Aorta (tissue), 5 donors: ENCODE measurements at regions of chr12 and their contacts with region 1.

Region 1: GRCh38 chr12:6323340-6323994 is 13.0 kb downstream of the PLEKHG6 start:
- DNase-seq: peak in 1 of 2 donors; percentile 64
- ATAC-seq: peak; percentile 57
- H3K4me3 ChIP-seq: no peak overlapping the region
- H3K27ac ChIP-seq: peak overlapping the region; percentile 38 to 80
- H3K4me1 ChIP-seq: no peaks in the 10 kb centered on the region
- H3K27me3 ChIP-seq: no peaks in the 10 kb centered on the region

Region 2: DNA sequence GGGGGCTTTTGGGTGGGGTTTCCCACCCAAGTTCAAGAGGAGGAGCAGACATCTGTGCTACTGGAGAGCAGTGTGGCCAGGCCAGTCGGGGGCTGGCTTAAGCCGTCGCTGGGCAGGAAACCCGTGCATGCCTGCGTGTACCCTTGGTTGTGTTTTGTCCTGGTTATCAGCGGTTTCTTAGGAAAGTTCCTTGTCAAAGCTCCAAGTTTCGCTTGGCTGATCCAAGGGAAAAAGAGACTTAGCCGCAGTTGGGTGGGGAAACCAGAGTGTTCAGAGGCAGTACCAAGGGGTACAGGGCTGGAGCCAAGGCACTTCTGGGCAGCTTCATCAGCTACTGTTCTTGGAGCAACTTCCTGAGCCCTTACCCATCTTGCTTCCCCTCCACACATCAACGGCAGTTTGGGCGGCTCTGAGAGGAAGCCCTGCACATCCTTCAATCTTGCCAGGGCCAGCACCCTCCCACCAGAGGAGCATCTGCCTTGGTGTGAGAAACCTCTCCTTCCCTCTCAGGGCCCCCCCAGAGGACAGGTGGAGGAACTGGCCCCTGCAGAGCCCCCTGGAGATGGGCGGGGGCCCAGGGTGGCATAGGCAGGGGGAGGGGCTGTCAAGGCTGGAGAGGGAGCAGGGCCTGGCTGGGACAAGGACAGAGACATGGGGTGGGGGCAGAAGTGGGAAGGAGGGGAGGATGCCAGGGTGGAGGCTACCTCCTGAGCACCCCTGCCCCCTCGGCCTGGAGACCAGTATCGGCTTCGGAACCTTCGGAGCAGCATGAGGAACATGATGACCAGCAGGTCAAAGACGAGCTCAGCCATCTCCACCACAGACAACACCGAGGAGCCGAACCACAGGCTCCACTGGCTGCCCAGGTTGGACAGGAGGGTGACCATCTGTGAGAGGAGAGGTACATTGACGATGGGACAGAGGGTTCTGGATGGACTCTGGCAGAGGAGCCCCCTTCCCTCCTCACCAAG is 24.2 kb after region 1 on chr12:
- intact Hi-C with region 1: loop called in 1 of 2 experiments (anchors 1 kb)
- DNase-seq: peak; percentile 90 to 91
- ATAC-seq: peak; percentile 90
- H3K4me3 ChIP-seq: no peak overlapping the region
- H3K27ac ChIP-seq: peak overlapping the region; percentile 49 to 89
- H3K4me1 ChIP-seq: peaks cover 2 to 3% of the 10 kb centered on the region in 2 donors
- H3K27me3 ChIP-seq: no peaks in the 10 kb centered on the region

Region 3: GRCh38 chr12:6470375-6471163 is 147.1 kb after region 1 on chr12 and contains the start of gene VAMP1:
- intact Hi-C with region 1: loop called (anchors 5 kb)
- DNase-seq: peak; percentile 99
- ATAC-seq: peak; percentile 99
- H3K4me3 ChIP-seq: peak within 1 kb of the TSS; percentile 32 to 47
- H3K27ac ChIP-seq: peak within 1 kb of the TSS in 1 of 2 donors; percentile 83
- H3K4me1 ChIP-seq: peaks cover 2 to 3% of the 10 kb centered on the region in 2 donors
- H3K27me3 ChIP-seq: no peaks in the 10 kb centered on the region
- total RNA-seq, gene VAMP1: 9.7 to 23.9 TPM